Activated CD4-positive, alpha-beta T cell treated with anti-CD3 and anti-CD28 coated beads for 36 hours (primary cell): ENCODE measurements at regions of chrX and their contacts with region 1.

Region 1: DNA sequence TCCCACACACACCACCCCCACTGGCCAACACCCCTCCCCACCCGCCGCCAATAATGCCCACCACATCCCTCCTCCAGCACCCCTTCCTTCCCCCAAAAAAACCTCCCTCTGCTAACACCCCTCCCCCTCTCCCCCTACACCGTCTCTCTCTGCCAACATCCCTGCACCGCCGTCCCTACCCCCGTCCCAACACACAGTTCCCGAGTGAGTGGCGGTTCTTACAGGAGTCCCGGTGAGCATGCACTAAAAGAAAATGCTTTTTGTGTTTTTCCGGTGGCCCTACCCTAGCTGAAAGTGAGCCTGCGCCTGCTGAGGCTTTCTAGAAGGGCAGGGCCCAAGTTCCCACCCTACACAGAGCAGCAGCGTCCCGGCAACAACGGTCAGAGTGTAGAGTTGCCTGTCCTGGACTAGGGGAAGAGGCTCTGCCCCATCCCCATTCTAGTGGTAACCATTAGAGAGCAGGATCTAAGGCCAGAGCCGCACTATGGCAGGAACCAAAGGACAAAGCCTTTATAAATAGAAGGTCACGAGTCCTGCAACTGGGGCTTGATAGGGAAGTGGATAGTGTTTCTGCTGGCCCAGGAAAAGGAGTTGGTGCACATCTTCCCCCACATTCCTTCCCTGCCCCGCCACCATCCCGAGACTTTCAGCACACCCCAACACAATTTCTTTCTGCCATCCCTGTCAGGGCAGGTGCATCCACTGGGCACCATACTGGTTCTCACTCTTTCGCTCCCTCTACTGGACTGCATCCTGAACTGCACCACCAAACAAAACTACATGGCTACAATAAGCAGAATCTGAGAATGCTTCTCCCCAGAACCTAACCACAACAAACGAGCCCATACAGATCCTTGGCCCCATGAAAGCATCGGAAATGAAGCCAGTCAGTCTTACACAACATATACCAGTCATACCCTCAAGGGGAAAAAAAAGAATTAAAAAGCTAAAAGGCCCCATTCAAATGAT is 78.1 kb upstream of the PAGE3 start:
- DNase-seq: peak; percentile 60
- ATAC-seq: peak; percentile 88
- H3K4me3 Mint-ChIP-seq: no peak overlapping the region
- H3K27ac Mint-ChIP-seq: peak overlapping the region; percentile 52
- H3K4me1 Mint-ChIP-seq: peaks cover 17% of the 10 kb centered on the region
- H3K27me3 Mint-ChIP-seq: no peaks in the 10 kb centered on the region

Region 2: DNA sequence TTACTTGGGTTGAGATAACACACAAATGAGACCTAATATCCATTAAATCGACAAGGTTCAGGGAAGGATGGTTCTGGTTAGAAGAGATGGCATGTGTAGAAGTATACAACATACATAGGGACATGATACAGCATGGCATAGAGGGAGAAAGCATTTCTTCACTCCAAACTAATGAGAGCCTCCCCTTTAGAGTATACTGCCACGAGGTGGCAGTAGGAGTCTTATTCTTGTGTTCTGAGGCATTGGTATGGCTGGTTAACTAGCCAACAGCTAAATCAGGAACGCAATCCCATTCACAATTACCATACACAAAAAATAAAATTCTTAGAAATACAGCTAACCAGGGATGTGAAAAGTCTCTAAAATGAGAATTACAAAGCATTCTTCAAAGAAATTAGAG is 451.2 kb before region 1 on chrX:
- CTCF ChIA-PET with region 1: no interaction called
- POLR2A ChIA-PET with region 1: no interaction called
- intact Hi-C with region 1: loop called in 1 of 2 experiments (anchors 10 kb)
- DNase-seq: peak; percentile 51
- ATAC-seq: peak; percentile 76
- H3K4me3 Mint-ChIP-seq: no peak overlapping the region
- H3K27ac Mint-ChIP-seq: no peak overlapping the region
- H3K4me1 Mint-ChIP-seq: no peaks in the 10 kb centered on the region
- H3K27me3 Mint-ChIP-seq: no peaks in the 10 kb centered on the region

Region 3: DNA sequence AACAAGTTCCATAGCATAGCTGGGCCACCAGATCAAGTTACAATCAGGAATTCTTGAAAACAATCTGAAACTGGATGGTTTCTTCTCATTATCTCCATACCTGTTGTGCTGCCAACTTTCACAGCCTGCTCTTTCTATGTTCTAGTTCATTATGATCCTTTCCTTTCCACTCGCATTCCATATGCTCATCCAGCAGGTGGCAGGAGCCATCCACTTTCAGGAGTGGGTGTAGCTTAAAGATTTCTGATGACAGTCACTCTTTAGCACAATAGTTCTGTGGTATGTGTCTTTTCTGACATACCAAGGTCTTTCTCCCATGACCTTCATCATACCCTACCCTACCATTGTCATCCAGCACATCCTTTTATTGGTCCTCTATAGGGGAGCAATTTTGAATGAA is 207.6 kb before region 1 on chrX:
- CTCF ChIA-PET with region 1: interaction called, 6 read pairs
- POLR2A ChIA-PET with region 1: no interaction called
- intact Hi-C with region 1: loop called in 1 of 2 experiments (anchors 1 kb)
- DNase-seq: peak; percentile 54
- ATAC-seq: no peak
- H3K4me3 Mint-ChIP-seq: no peak overlapping the region
- H3K27ac Mint-ChIP-seq: no peak overlapping the region
- H3K4me1 Mint-ChIP-seq: no peaks in the 10 kb centered on the region
- H3K27me3 Mint-ChIP-seq: no peaks in the 10 kb centered on the region

Region 4: GRCh38 chrX:55210931-55211681 is 131.7 kb before region 1 on chrX:
- CTCF ChIA-PET with region 1: no interaction called
- POLR2A ChIA-PET with region 1: no interaction called
- intact Hi-C with region 1: no loop called
- DNase-seq: no peak
- ATAC-seq: no peak
- H3K4me3 Mint-ChIP-seq: no peak overlapping the region
- H3K27ac Mint-ChIP-seq: no peak overlapping the region
- H3K4me1 Mint-ChIP-seq: no peaks in the 10 kb centered on the region
- H3K27me3 Mint-ChIP-seq: no peaks in the 10 kb centered on the region